BJ (cell line): ENCODE measurements at regions of chr3 and their contacts with region 1.

Region 1: DNA sequence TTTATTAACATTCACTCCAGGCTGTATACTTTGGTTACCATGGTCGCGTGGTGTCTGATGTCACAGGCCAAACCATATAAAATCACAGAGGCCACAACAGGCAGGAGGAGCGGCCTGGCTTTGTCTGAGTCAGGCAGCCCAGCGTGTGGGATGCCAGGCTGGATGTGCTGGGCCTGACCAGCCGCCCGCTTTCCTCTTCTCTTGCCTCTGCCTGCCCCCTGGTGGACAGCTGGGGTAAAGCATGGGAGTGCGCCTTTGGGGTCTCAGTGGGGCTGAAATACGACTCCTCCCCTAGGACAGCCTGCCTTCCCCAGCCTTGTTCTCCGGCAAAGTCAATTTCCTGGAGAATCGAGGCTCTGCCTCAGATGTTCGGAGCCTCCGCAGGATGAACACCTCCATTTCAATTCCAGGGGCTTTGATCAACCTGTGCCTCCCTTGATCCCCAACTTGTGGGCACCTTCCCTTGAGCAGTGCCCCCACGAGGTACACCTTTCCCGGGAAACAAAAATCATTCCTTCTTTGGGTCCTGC is 78.2 kb downstream of the CCNL1 start:
- DNase-seq: peak; percentile 81
- H3K4me3 ChIP-seq: no peak overlapping the region
- H3K27me3 ChIP-seq: no peaks in the 10 kb centered on the region
- CTCF ChIP-seq: peak; percentile 96

Region 2: GRCh38 chr3:157064402-157064801 is 17.3 kb before region 1 on chr3:
- CTCF ChIA-PET with region 1: no interaction called
- POLR2A ChIA-PET with region 1: no interaction called
- DNase-seq: no peak
- H3K4me3 ChIP-seq: no peak overlapping the region
- H3K27me3 ChIP-seq: no peaks in the 10 kb centered on the region; the same call in 1 of the 2 replicates
- CTCF ChIP-seq: no peak

Region 3: GRCh38 chr3:157130467-157131251 is 48.9 kb after region 1 on chr3:
- CTCF ChIA-PET with region 1: interaction called, 140 read pairs
- POLR2A ChIA-PET with region 1: no interaction called
- DNase-seq: no peak
- H3K4me3 ChIP-seq: no peak overlapping the region
- H3K27me3 ChIP-seq: no peaks in the 10 kb centered on the region
- CTCF ChIP-seq: peak; percentile 60